ENCODE measurements at regions of chr19 and their contacts with region 1.

Region 1: DNA sequence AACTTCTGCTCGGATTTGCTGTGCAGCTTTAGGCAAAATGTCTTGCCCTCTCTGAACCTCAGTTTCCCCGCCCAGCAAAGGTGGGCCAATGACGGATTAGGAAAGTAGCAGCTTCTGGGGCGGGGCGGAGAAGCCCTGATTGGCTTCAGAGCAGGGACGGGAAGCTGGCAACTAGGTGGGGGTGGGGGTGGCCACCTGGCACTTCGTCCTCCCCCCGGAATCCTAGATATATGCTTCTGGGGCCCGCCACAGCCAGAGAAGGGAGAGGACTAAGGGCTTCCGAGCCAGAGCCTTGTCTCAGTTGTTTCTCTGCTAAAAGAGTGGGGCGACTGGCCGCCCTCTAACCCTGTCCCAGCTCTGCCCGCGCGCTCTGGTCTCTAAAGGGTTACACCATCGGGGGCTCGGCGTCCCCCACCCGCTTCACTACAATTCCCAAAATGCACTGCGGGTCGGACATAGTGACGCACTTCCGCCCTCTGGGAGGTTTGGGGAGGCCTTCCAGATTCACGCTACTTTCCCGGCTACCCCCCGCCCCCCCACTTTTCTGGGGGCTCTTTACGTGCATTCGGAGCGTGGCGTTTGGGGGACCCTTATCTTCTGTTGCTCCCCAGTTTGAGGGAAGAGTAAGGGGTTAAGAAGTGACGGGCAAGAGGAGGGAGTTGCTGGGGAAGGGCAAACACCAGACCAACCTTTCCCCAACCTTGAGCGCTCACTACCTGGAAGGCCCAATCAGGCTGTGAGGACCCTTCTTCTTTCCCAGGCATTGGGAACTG is 672 bp upstream of the IRF2BP1 start:
- DNase-seq: peak; percentile 89 to 94
- ATAC-seq: peak; percentile 89 to 94 (median 90)
- H3K4me3 ChIP-seq: peak overlapping the region; percentile 87
- H3K27ac ChIP-seq: peak overlapping the region; percentile 86
- H3K4me1 ChIP-seq: peaks cover 29% of the 10 kb centered on the region
- H3K27me3 ChIP-seq: no peaks in the 10 kb centered on the region
- CTCF ChIP-seq: no peak

Region 2: GRCh38 chr19:45817010-45817724 is 69.4 kb before region 1 on chr19:
- intact Hi-C with region 1: loop called in 1 of 2 experiments (anchors 1 kb)
- DNase-seq: peak; percentile 92 to 97
- ATAC-seq: peak; percentile 86 to 91 (median 88)
- H3K4me3 ChIP-seq: no peak overlapping the region
- H3K27ac ChIP-seq: no peak overlapping the region
- H3K4me1 ChIP-seq: no peaks in the 10 kb centered on the region
- H3K27me3 ChIP-seq: peaks cover 0 to 2% (median 0%) of the 10 kb centered on the region in 3 donors
- CTCF ChIP-seq: peak; percentile 95

Region 3: GRCh38 chr19:45863843-45864628 is 22.6 kb before region 1 on chr19 and contains the start of gene FOXA3:
- intact Hi-C with region 1: loop called in 1 of 2 experiments (anchors 2 kb)
- DNase-seq: peak; percentile 62 to 70
- ATAC-seq: peak; percentile 46 to 70 (median 68)
- H3K4me3 ChIP-seq: peak within 1 kb of the TSS; percentile 92
- H3K27ac ChIP-seq: no peak within 1 kb of the TSS
- H3K4me1 ChIP-seq: peaks cover 5% of the 10 kb centered on the region
- H3K27me3 ChIP-seq: peaks cover 0 to 8% (median 0%) of the 10 kb centered on the region in 3 donors
- CTCF ChIP-seq: peak; percentile 51
- total RNA-seq, gene FOXA3: not detected

Region 4: GRCh38 chr19:45927565-45928261 is 41.1 kb after region 1 on chr19:
- intact Hi-C with region 1: no loop called
- DNase-seq: peak; percentile 84 to 93
- ATAC-seq: peak; percentile 85 to 99 (median 95)
- H3K4me3 ChIP-seq: peak overlapping the region; percentile 15
- H3K27ac ChIP-seq: no peak overlapping the region
- H3K4me1 ChIP-seq: peaks cover 5% of the 10 kb centered on the region
- H3K27me3 ChIP-seq: peaks cover 0 to 4% (median 0%) of the 10 kb centered on the region in 3 donors
- CTCF ChIP-seq: no peak

Region 5: GRCh38 chr19:45994989-45995714 is 108.5 kb after region 1 on chr19 and contains the start of gene CCDC61:
- intact Hi-C with region 1: loop called in 1 of 2 experiments (anchors 5 kb)
- DNase-seq: peak; percentile 91 to 96
- ATAC-seq: peak; percentile 98 to 99 (median 98)
- H3K4me3 ChIP-seq: peak within 1 kb of the TSS; percentile 75
- H3K27ac ChIP-seq: peak within 1 kb of the TSS; percentile 81
- H3K4me1 ChIP-seq: no peaks in the 10 kb centered on the region
- H3K27me3 ChIP-seq: peaks cover 0 to 7% (median 7%) of the 10 kb centered on the region in 3 donors
- CTCF ChIP-seq: no peak
- total RNA-seq, gene CCDC61: 4.9 to 6.2 (median 5.5) TPM